Dorsolateral prefrontal cortex (tissue), 120 donors: ENCODE measurements at regions of chr2 and their contacts with region 1.

Region 1: GRCh38 chr2:217756375-217757107 is 246.3 kb downstream of the TNS1 start:
- DNase-seq: peak; percentile 64 to 87 (median 82)
- H3K4me3 ChIP-seq: peak overlapping the region; percentile 20 to 70 (median 52)
- H3K27ac ChIP-seq: peak overlapping the region in 10 of 59 donors; percentile 10 to 73 (median 27)
- H3K27me3 ChIP-seq: no peaks in the 10 kb centered on the region
- CTCF ChIP-seq: peak; percentile 66 to 99 (median 96)

Region 2: DNA sequence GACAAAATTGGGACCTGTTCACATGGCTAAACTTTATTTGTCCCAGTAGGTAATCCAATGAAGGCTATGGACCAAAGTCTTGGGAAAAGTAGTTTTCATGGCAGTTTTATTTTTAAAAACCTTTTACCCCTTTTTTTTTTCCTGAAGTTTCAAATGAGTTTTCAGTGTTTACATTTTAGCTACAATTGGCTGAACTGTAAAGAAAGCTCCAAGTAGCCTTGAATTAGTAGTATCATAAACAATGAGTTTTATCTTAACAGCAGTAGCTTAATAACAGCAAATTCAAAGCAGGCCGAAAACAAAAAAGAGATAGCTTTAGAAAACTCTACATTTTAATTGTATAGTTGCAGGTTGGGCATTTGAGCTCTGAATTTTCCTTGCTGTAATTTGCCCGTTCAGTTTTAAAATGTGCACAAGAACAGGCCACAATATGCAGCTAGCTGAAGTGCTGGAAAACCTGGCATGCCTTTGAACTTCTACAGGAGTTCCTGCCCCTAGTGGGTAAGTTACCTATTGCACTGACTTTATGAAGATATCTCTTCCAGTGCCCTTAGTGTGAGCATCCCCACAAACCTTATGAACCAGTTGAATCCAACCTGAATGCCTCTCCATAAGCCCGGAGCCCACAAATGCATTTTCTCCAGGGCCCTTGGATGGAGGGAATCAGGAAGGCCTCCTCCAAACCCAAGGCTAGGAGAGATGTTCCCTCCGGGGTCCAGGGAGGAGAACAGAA is 1540.7 kb before region 1 on chr2:
- intact Hi-C with region 1: no loop called
- DNase-seq: no peak
- H3K4me3 ChIP-seq: no peak overlapping the region
- H3K27ac ChIP-seq: no peak overlapping the region
- H3K27me3 ChIP-seq: no peaks in the 10 kb centered on the region
- CTCF ChIP-seq: peak in 5 of 56 donors; percentile 5 to 40 (median 29)

Region 3: DNA sequence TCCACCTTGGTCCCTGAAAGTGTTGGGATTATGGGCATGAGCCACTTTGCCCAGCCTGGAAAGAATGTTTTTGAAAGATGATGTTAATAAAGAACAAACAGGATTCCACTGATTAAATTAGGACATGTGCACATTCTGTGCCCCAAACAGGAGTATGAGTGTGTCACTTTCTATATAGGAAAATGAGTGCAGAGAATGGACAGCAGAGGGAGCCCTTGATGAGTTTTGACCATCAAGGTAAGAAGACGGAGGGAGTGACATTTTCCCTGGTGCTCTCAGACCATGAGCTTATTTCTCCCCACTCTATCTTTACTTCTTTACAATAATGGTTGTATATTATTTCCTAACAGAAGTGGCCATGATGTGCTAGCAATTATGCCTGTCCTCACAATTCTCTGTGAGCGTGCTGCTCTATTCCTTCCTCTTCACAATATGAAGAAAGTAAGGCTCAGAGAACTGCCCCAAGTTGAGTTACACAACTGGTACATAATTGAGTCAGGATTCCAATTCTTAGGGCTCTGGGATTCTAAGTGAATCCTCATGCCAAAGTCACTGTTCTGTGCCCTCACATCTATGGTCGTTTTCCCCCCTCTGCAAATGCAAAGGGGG is 1237.3 kb before region 1 on chr2:
- intact Hi-C with region 1: loop called in 1 of 2 experiments (anchors 10 kb)
- DNase-seq: peak in 4 of 10 donors; percentile 34 to 78 (median 54)
- H3K4me3 ChIP-seq: no peak overlapping the region
- H3K27ac ChIP-seq: no peak overlapping the region
- H3K27me3 ChIP-seq: no peaks in the 10 kb centered on the region
- CTCF ChIP-seq: peak; percentile 72 to 94 (median 85)

Region 4: DNA sequence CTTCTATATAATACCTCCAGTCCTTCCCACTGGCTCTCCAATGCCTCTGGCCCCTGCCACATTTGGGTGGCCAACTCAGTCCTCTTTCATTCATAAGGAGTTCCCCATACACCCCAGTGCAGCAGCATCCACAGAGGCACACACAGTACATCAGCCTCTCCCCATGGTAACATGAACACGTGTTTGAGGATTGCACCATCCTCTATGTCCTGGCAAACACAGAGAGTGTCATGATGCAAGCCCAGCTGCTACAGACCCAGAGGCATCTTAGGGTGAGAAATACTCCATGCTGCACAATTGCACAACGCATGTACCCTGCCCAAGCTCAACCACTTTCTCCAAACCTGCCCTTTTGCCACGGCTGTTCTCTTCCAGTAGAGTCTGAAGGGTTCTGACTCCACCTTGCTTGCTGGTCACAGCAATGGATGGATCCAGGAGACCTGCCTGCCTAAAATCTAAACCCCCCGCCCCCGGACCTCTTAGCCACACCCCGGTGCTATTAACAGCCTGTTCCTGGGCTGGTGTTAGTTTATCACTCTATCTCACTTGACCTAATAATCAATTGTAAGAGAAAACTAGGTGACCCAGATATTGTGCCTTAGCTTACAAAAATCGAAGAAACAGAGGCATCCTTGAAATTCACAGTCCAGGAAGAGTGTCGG is 1072.6 kb before region 1 on chr2:
- intact Hi-C with region 1: loop called in 1 of 2 experiments (anchors 2 kb)
- DNase-seq: peak in 2 of 10 donors; percentile 64 to 65
- H3K4me3 ChIP-seq: no peak overlapping the region
- H3K27ac ChIP-seq: peak overlapping the region in 7 of 59 donors; percentile 0 to 59 (median 37)
- H3K27me3 ChIP-seq: no peaks in the 10 kb centered on the region
- CTCF ChIP-seq: no peak

Region 5: GRCh38 chr2:217151509-217152206 is 604.9 kb before region 1 on chr2:
- intact Hi-C with region 1: loop called in 1 of 2 experiments (anchors 10 kb)
- DNase-seq: no peak
- H3K4me3 ChIP-seq: no peak overlapping the region
- H3K27ac ChIP-seq: no peak overlapping the region
- H3K27me3 ChIP-seq: peaks cover 0 to 32% (median 0%) of the 10 kb centered on the region in 45 donors
- CTCF ChIP-seq: no peak

Region 6: DNA sequence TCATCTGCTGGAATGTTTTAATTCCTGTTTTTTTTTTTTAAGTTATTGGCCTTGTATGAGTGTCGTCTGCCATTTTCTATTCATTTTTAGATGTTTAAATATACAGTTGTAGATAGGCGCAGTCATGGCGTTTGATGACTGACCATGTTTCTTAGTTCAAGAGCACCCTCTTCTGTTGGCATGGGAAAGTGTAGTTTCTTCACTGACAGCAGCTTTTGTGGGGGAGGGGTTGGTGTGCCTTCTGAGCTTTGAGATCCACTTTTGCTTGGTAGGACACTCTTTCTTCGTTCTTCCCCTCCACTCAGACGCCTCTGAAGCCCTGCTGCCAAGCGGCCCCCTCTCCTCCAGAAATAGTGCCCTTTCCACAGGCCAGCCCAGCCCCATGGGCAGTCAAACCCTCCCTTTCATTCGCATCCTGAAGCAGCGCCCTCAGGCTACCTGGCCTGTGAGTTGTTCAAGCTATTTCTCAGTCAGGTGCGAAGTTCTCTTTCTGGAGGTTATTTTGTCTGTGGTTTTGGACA is 245.7 kb before region 1 on chr2:
- intact Hi-C with region 1: loop called in 1 of 2 experiments (anchors 5 kb)
- DNase-seq: peak in 8 of 10 donors; percentile 26 to 78 (median 50)
- H3K4me3 ChIP-seq: peak overlapping the region in 11 of 59 donors; percentile 0 to 46 (median 24)
- H3K27ac ChIP-seq: peak overlapping the region in 1 of 59 donors; percentile 11
- H3K27me3 ChIP-seq: no peaks in the 10 kb centered on the region
- CTCF ChIP-seq: peak; percentile 44 to 90 (median 78)

Region 7: DNA sequence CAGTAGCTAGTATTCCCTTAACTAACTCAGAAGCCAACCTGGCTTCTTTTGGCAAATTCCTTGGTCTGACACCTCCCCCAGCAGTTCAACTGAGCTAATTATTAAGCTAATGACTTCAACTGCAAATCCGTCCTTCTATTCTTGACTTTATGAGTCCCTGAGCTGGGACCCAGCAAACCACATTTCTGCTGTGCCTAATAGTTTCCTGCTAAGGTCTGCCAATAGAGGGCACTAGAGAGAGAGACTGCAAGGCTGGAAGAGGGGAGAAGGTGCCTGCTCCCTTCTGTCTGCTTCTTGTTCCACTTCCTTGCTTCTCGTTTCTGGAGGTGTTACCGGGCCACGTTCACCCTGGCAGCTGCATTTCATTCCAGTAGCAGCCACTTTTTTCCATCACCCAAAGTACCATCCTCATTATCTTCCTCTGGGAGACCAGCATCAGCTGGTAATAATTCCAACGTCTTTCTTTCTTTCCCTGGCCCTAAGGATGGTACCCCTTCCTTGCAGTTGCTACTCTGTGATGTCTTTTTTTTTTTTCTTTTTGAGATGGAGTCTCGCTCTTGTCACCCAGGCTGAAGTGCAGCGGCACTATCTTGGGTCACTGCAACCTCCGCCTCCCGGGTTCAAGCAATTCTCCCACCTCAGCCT is 105.7 kb before region 1 on chr2:
- intact Hi-C with region 1: loop called in 1 of 2 experiments (anchors 2 kb)
- DNase-seq: peak in 3 of 10 donors; percentile 25 to 30 (median 28)
- H3K4me3 ChIP-seq: no peak overlapping the region
- H3K27ac ChIP-seq: no peak overlapping the region
- H3K27me3 ChIP-seq: no peaks in the 10 kb centered on the region
- CTCF ChIP-seq: peak in 55 of 56 donors; percentile 31 to 84 (median 73)